CD8-positive, alpha-beta T cell (primary cell): ENCODE measurements at regions of chr19 and their contacts with region 1.

Region 1: GRCh38 chr19:48713864-48714758 is 5.4 kb downstream of the MAMSTR start:
- DNase-seq: peak; percentile 94 to 99 (median 96)
- ATAC-seq: peak; percentile 95
- H3K4me3 ChIP-seq: peak overlapping the region; percentile 76 to 83
- H3K4me3 Mint-ChIP-seq: peak overlapping the region; percentile 85
- H3K27ac ChIP-seq: peak overlapping the region; percentile 45 to 70
- H3K27ac Mint-ChIP-seq: peak overlapping the region; percentile 73
- H3K4me1 ChIP-seq: peaks cover 20% of the 10 kb centered on the region
- H3K4me1 Mint-ChIP-seq: peaks cover 18% of the 10 kb centered on the region
- H3K27me3 ChIP-seq: no peaks in the 10 kb centered on the region
- H3K27me3 Mint-ChIP-seq: no peaks in the 10 kb centered on the region
- CTCF ChIP-seq: no peak

Region 2: DNA sequence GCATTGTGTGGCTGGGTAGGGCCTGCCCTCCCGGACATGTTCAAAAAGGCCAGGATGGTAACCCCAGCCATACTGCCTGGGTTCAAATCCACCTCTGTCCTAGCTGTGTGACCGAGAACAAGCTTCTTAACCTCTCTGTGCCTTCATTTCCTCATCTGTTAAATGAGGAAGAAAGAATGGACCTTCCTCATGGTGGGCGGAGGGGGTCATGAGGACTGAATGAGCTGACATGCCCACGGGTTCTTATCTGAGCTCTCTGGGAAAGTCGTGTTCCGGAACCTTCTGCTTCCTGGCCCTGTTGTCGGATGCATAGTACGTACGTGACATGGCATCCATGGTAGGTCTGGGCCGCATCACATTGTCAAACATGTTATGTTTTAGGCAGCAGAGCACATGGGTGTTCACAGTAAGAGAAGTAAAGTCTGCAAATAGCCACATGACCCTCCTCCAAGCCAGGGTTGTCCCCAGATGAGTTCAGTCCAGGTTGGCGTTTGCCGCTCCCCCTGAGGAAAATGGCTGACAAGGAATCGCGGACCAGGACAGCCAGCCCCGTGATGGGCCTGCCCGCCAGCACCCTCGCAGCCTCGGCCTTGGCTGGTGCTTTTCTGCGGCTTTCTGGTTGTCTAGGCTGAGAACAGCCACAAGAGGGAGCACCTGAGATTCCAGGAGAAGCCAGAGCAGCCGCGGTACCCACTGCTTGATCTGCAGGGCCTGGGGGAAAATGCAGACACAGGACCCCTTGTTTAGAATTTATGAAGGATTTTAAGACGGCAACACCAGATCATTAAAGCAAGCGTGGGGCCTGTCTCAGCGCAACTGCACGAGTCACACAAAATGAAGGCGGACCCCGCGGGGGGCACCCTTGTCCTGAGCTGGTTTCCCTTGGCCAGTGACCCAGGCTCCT is 38.9 kb before region 1 on chr19:
- CTCF ChIA-PET with region 1: interaction called, 18 read pairs
- POLR2A ChIA-PET with region 1: no interaction called
- intact Hi-C with region 1: no loop called
- DNase-seq: peak; percentile 56 to 88 (median 74)
- ATAC-seq: peak; percentile 98
- H3K4me3 ChIP-seq: no peak overlapping the region
- H3K4me3 Mint-ChIP-seq: no peak overlapping the region
- H3K27ac ChIP-seq: no peak overlapping the region
- H3K27ac Mint-ChIP-seq: peak overlapping the region; percentile 45
- H3K4me1 ChIP-seq: peaks cover 9% of the 10 kb centered on the region
- H3K4me1 Mint-ChIP-seq: peaks cover 6% of the 10 kb centered on the region
- H3K27me3 ChIP-seq: no peaks in the 10 kb centered on the region
- H3K27me3 Mint-ChIP-seq: no peaks in the 10 kb centered on the region
- CTCF ChIP-seq: peak; percentile 64